Activated CD8-positive, alpha-beta T cell treated with anti-CD3 and anti-CD28 coated beads, Interleukin-2, amount 10 ng/mL, durations not matched to agents 7 days and 5 days (primary cell): ENCODE measurements at regions of chr9 and their contacts with region 1.

Region 1: GRCh38 chr9:89549031-89549644 is 51.2 kb upstream of the SEMA4D start:
- DNase-seq: peak; percentile 89
- ATAC-seq: peak; percentile 98
- H3K4me3 Mint-ChIP-seq: no peak overlapping the region
- H3K27ac Mint-ChIP-seq: no peak overlapping the region
- H3K4me1 Mint-ChIP-seq: peaks cover 19% of the 10 kb centered on the region
- H3K27me3 Mint-ChIP-seq: peaks cover 4% of the 10 kb centered on the region

Region 2: GRCh38 chr9:89410641-89411350 is 138.3 kb before region 1 on chr9:
- CTCF ChIA-PET with region 1: interaction called, 16 read pairs
- POLR2A ChIA-PET with region 1: no interaction called
- DNase-seq: no peak
- ATAC-seq: peak; percentile 23
- H3K4me3 Mint-ChIP-seq: peak overlapping the region; percentile 2
- H3K27ac Mint-ChIP-seq: peak overlapping the region; percentile 78
- H3K4me1 Mint-ChIP-seq: peaks cover 97% of the 10 kb centered on the region
- H3K27me3 Mint-ChIP-seq: no peaks in the 10 kb centered on the region

Region 3: GRCh38 chr9:89448381-89448780 is 100.8 kb before region 1 on chr9:
- CTCF ChIA-PET with region 1: interaction called, 31 read pairs
- POLR2A ChIA-PET with region 1: no interaction called
- DNase-seq: peak; percentile 54
- ATAC-seq: peak; percentile 41
- H3K4me3 Mint-ChIP-seq: no peak overlapping the region
- H3K27ac Mint-ChIP-seq: peak overlapping the region; percentile 88
- H3K4me1 Mint-ChIP-seq: peaks cover 98% of the 10 kb centered on the region
- H3K27me3 Mint-ChIP-seq: no peaks in the 10 kb centered on the region

Region 4: DNA sequence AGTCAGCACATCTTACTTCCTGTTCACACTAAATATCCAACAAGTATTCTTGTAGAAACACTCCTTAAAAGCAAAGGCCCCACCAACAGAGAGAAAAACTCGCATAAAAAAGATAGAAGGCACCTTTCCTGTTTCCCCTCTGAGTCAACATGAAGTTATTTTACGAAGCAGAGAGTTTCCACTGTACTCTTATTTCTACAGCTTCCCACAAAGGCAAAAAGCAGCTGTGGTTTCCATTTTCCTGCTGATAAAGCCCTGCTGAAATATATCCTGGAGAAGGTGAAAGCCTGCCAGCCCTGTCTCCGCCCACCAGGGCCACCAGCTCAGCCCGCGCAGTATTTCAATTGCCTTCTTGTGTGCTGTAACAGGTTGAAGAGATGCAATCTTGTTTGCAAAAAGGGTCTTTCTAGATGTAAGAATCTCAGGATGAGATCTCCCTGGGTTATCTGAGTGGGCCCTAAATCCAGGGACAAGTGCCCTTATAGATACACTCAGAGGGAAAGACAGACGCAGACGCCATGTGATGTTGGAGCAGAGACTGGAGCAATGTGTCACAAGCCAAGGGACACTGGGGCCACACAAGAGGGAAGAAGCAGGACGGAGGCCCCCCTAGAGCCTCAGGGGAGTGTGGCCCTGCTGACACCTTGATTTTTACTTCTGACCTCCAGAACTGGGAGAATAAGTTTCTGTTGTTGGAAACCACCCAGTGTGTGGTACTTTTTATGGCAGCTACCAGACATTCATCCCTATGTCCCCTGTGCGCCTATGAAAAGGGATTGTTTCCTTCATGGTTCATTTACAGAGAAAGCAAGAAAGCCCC is 71.1 kb before region 1 on chr9:
- CTCF ChIA-PET with region 1: interaction called, 40 read pairs
- POLR2A ChIA-PET with region 1: interaction called, 20 read pairs
- DNase-seq: peak; percentile 67
- ATAC-seq: peak; percentile 57
- H3K4me3 Mint-ChIP-seq: peak overlapping the region; percentile 71
- H3K27ac Mint-ChIP-seq: peak overlapping the region; percentile 91
- H3K4me1 Mint-ChIP-seq: peaks cover 91% of the 10 kb centered on the region
- H3K27me3 Mint-ChIP-seq: no peaks in the 10 kb centered on the region

Region 5: DNA sequence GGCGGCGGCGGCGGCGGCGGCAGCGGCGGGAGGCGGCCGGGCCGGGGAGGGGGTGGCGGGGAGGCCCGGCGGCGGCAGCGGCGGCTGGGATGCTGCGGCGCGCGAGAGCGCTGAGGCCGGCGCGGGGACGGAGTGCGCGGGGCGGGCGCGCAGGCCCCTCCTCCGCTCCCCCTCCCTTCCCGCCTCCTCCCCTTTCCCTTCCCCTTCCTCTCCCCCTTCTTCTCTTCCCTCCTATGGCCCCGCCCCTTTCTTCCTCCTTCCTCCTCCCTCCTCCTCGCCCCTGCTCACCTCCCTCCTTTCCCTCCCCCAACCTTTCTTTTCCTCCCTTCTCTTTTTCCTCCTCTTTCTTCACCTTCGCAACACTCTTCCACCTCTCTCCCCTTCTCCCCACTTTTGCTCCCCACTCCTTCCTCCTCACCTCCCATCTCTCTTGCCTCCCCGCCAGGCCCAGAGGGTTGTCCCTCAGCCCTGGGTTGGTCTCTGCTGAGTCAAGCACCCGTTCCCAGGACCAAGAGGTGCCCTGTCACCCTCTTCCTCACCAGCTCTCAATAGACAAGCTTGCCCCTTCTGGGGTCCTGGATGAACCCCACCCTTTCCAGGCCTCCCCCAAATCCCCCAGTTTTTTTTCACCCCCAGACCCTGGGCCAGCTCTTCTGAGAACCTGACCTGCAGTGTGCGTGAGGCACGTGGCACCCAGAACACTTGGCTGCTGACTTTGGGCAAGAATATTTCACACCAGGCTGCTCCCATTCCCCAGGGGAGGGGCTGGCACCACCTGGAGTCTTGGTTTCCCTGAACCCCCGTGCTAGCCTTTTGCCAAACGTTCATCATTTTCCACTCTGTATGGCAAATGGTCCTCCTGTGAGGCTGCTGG is 50.9 kb before region 1 on chr9 and contains the start of gene SEMA4D:
- CTCF ChIA-PET with region 1: interaction called, 46 read pairs
- POLR2A ChIA-PET with region 1: interaction called, 12 read pairs
- DNase-seq: peak; percentile 78
- ATAC-seq: peak; percentile 7
- H3K4me3 Mint-ChIP-seq: peak within 1 kb of the TSS; percentile 92
- H3K27ac Mint-ChIP-seq: peak within 1 kb of the TSS; percentile 94
- H3K4me1 Mint-ChIP-seq: peaks cover 75% of the 10 kb centered on the region
- H3K27me3 Mint-ChIP-seq: no peaks in the 10 kb centered on the region
- total RNA-seq, gene SEMA4D: 314 to 321 TPM

Region 6: DNA sequence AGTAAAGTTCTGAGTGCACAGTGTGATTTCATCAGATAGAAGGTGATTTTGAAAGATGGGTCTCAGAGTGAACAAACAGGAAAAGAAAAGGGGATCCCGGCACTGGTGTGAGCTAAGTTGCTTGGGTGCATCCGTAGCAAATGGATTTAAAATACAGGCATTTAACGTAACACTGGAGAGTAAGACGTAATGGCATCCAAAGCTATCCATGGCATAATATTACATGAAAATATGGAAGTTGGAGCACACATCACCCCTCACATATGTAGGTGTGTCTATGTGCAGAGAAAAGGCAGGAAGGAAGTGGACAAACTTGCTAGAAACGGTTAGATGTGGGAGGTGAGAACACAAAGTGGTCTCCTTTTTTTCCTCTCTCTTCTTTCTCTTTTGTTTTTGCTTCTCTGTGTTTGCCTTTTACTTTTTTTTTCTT is 13.0 kb before region 1 on chr9:
- CTCF ChIA-PET with region 1: interaction called, 98 read pairs
- POLR2A ChIA-PET with region 1: interaction called, 8 read pairs
- DNase-seq: peak; percentile 64
- ATAC-seq: peak; percentile 78
- H3K4me3 Mint-ChIP-seq: peak overlapping the region; percentile 64
- H3K27ac Mint-ChIP-seq: peak overlapping the region; percentile 89
- H3K4me1 Mint-ChIP-seq: peaks cover 90% of the 10 kb centered on the region
- H3K27me3 Mint-ChIP-seq: no peaks in the 10 kb centered on the region